HEK293 (cell line): ENCODE measurements at regions of chr6 and their contacts with region 1.

Region 1: GRCh38 chr6:32785781-32786533 is 22.6 kb upstream of the HLA-DQB2 start:
- H3K4me3 ChIP-seq: no peak overlapping the region
- H3K27ac ChIP-seq: no peak overlapping the region
- H3K4me1 ChIP-seq: no peaks in the 10 kb centered on the region
- CTCF ChIP-seq: peak; percentile 41; the same call in 1 of the 2 replicates

Region 2: GRCh38 chr6:32424589-32425300 is 361.2 kb before region 1 on chr6:
- CTCF ChIA-PET with region 1: interaction called, 179 read pairs
- POLR2A ChIA-PET with region 1: no interaction called
- H3K4me3 ChIP-seq: no peak overlapping the region
- H3K27ac ChIP-seq: no peak overlapping the region
- H3K4me1 ChIP-seq: no peaks in the 10 kb centered on the region
- CTCF ChIP-seq: no peak

Region 3: GRCh38 chr6:32622545-32623401 is 163.2 kb before region 1 on chr6:
- CTCF ChIA-PET with region 1: interaction called, 31 read pairs
- POLR2A ChIA-PET with region 1: no interaction called
- H3K4me3 ChIP-seq: no peak overlapping the region
- H3K27ac ChIP-seq: no peak overlapping the region
- H3K4me1 ChIP-seq: peaks cover 18% of the 10 kb centered on the region
- CTCF ChIP-seq: no peak

Region 4: DNA sequence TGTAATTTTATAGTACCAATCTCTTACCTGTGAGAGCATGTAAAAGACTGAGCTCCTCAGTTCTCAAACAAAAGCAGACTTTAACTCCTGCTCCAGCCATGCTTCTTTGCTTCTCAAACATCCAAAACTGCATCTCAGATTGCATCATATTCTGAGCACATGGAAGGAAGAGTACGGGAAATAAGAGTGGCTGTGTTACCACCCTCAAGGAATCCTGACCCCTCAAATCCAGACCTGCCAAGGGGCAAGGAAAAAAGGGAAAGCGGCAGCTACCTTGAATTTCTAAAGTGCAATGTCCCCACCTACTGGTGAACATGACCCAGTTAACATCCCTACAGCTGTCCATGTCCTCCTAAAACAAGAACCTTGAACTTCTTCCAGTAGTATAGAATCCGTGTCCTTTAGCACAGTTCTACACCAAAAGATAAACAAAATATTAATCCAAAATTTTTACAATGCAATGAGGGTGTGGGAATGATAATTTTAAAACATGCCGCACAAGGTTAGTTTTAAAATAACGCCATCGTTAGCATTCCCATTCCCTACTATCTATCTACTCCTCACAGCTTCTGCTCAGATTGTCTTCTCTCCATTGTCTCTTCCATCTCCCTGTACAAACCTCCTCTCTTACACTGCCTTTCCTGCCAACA is 85.4 kb before region 1 on chr6:
- CTCF ChIA-PET with region 1: interaction called, 90 read pairs
- POLR2A ChIA-PET with region 1: no interaction called
- H3K4me3 ChIP-seq: no peak overlapping the region
- H3K27ac ChIP-seq: no peak overlapping the region
- H3K4me1 ChIP-seq: no peaks in the 10 kb centered on the region
- CTCF ChIP-seq: peak; percentile 85

Region 5: DNA sequence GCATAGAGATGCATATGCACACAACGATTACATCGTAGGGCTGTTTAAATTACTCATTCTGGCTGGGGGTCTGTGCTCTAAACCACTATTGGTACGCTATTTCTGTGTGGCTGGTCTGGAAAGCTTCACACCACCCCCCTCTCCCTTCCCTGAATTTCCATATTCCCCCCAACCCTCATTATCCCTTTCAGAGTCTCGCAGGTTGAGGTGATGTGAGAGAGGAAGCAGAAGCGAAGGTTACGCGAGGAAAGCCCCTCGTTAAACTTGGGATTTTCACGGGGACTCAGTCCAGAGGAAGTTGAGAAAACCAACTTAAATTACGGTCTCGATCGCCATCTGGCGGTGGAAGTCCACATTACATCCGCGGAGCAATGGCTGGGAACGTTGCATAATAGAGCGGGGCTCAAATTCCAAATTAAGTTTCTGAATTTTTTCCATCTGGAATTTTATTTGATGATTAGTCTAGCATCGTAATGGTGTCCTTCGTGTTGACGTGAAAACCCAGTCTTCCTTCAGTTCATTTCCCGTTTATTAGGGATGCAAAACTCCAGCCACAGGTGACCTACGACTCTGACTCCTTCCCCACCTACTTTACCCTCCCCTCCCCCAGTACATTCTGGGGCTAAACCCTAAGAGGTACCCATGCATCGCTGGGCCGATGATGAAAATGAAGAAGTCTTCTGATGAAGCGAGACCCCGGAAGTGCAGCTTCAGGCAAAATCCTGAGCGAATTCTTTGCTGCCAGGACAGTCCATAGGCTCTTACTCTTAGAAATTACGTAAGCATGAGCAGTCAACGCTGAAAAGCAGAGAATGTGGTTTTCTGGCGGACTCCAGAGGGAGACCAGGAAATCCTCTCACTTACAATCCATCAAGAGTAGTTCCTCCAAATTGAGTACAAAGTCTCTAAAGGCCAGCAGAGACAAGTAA is 11.2 kb after region 1 on chr6:
- CTCF ChIA-PET with region 1: interaction called, 20 read pairs
- POLR2A ChIA-PET with region 1: no interaction called
- H3K4me3 ChIP-seq: peak overlapping the region; percentile 19
- H3K27ac ChIP-seq: no peak overlapping the region
- H3K4me1 ChIP-seq: no peaks in the 10 kb centered on the region
- CTCF ChIP-seq: peak; percentile 72

Region 6: GRCh38 chr6:32851025-32851424 is 65.1 kb after region 1 on chr6:
- CTCF ChIA-PET with region 1: no interaction called
- POLR2A ChIA-PET with region 1: no interaction called
- H3K4me3 ChIP-seq: no peak overlapping the region
- H3K27ac ChIP-seq: no peak overlapping the region
- H3K4me1 ChIP-seq: no peaks in the 10 kb centered on the region; the same call in 1 of the 2 replicates
- CTCF ChIP-seq: no peak

Region 7: GRCh38 chr6:33112148-33112547 is 326.2 kb after region 1 on chr6:
- CTCF ChIA-PET with region 1: no interaction called
- POLR2A ChIA-PET with region 1: no interaction called
- H3K4me3 ChIP-seq: no peak overlapping the region
- H3K27ac ChIP-seq: no peak overlapping the region
- H3K4me1 ChIP-seq: no peaks in the 10 kb centered on the region
- CTCF ChIP-seq: no peak